ENCODE measurements at regions of chr9 and their contacts with region 1.

Region 1: GRCh38 chr9:97921959-97922724 is at the start of gene TRMO:
- DNase-seq: peak; percentile 93
- ATAC-seq: peak; percentile 82
- H3K4me3 ChIP-seq: peak within 1 kb of the TSS; percentile 76
- H3K27ac ChIP-seq: peak within 1 kb of the TSS; percentile 89
- H3K4me1 ChIP-seq: peaks cover 10% of the 10 kb centered on the region
- H3K27me3 ChIP-seq: peaks cover 14% of the 10 kb centered on the region; the same call in 1 of the 2 replicates
- CTCF ChIP-seq: peak; percentile 73
- total RNA-seq, gene TRMO: 7.5 and 14.3 TPM in 2 replicates

Region 2: GRCh38 chr9:97632985-97633858 is 288.9 kb before region 1 on chr9 and contains the starts of genes NCBP1 and TSTD2:
- CTCF ChIA-PET with region 1: no interaction called
- POLR2A ChIA-PET with region 1: interaction called, 7 read pairs
- intact Hi-C with region 1: loop called (anchors 1 kb)
- DNase-seq: peak; percentile 94
- ATAC-seq: peak; percentile 91
- H3K4me3 ChIP-seq: peak within 1 kb of the TSS; percentile 96
- H3K27ac ChIP-seq: peak within 1 kb of the TSS; percentile 89
- H3K4me1 ChIP-seq: peaks cover 16% of the 10 kb centered on the region
- H3K27me3 ChIP-seq: no peaks in the 10 kb centered on the region
- CTCF ChIP-seq: no peak
- total RNA-seq, gene NCBP1: 22.6 and 23.0 TPM in 2 replicates
- total RNA-seq, gene TSTD2: 7.4 and 11.2 TPM in 2 replicates

Region 3: DNA sequence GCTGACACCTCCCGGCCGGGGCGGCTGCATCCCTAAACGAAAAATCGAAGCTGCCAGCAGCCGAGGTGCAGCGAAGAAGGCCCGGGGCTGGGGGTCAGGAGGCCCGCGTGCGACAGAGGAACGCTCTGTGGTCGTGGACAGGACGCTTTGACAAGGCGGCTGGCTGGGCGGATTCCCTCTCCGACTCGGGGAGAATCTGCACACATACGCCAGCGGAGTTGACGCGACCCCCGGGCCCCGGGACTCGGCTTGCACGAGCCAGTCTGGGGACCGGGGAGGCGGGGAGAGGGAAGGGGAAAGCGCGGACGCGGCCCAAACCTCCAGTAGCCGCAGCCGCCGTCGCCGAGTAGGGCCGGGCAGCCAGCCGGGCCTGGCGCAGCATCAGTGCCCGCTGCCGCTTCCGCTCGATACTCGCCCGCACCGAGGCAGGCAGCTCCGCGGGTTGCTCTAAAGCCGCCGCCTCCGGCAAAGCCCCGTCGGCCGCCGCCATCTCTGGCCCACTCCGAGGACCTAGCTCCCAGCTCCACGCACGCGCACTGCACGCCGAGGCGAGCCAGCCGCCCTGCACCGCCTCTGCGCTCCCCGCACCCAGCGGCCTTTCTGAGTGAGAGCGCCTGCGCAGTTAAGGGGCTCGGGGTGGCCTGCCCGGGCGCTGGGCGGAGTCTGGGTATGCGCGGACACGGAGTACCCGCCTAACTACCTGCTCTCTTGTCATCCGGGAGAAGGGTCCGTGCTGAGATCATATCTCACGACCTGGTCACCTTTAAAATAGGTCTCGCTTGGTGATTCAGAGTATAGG is 225.1 kb before region 1 on chr9 and contains the start of gene XPA:
- CTCF ChIA-PET with region 1: no interaction called
- POLR2A ChIA-PET with region 1: interaction called, 13 read pairs
- intact Hi-C with region 1: no loop called
- DNase-seq: peak; percentile 92
- ATAC-seq: peak; percentile 91
- H3K4me3 ChIP-seq: peak within 1 kb of the TSS; percentile 83
- H3K27ac ChIP-seq: peak within 1 kb of the TSS; percentile 39
- H3K4me1 ChIP-seq: peaks cover 34% of the 10 kb centered on the region
- H3K27me3 ChIP-seq: no peaks in the 10 kb centered on the region
- CTCF ChIP-seq: no peak
- total RNA-seq, gene XPA: 7.4 and 9.4 TPM in 2 replicates

Region 4: DNA sequence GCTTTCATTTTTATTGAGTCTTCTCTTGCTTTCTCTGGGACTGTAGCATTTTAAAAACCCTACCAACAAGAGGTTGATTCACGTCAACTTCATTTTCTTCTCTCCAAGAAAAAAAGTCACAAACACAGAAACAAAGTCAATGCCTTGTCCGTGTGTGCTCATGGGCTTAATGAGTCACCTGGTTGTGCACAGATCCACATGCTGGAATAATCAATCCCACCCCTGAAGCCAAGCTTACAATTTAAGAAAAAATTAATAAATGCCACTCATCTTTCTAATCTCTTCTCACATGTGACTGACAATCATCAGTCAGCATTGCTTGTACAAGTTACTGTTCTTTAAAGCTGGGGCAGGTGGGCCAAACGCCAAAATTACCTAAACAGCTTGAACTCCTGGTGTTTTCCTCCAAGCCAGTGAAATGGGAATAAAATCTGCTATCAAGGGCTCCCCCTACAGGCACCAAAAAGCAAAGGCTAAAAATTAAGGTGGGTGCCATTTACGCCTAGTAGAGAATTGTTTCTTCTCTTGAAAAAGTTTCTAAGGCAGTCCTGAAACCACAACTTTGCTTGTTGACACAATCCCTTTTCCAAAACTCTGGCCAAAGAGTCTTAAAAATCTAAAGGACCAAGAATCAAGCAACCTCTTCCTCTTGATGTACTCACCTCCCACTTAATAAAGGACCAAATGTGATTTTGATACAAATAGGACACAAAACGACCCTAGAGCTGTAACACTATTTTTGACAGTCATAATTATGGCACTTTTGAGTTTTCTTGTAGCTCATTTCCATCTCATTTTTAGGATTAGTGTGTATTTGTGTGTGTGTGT is 21.2 kb before region 1 on chr9:
- CTCF ChIA-PET with region 1: no interaction called
- POLR2A ChIA-PET with region 1: no interaction called
- intact Hi-C with region 1: no loop called
- DNase-seq: peak; percentile 59
- ATAC-seq: peak; percentile 37
- H3K4me3 ChIP-seq: no peak overlapping the region
- H3K27ac ChIP-seq: no peak overlapping the region
- H3K4me1 ChIP-seq: peaks cover 7% of the 10 kb centered on the region
- H3K27me3 ChIP-seq: no peaks in the 10 kb centered on the region
- CTCF ChIP-seq: peak; percentile 81

Region 5: DNA sequence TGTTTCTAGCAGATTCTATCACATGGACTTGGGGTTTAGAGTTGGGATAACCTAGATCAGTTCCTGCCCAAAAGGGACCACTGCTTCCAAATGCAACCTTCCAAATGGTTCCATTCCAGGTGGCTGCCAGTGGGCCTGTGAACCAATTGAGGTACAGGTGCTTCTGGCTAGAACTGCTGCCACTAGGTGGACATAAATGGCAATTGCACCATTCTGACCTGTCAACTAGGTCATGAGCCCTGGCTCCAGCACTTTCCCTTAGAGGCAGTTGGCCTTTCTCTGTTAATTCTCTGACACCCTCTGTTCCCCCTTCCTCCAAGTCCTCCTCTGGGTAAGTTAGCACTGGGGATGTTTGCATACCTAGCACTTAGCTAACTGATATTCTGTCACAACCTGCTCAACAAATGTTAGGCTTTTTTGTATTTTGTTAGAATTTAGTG is 32.4 kb after region 1 on chr9:
- CTCF ChIA-PET with region 1: no interaction called
- POLR2A ChIA-PET with region 1: no interaction called
- intact Hi-C with region 1: loop called (anchors 1 kb)
- DNase-seq: peak; percentile 57
- ATAC-seq: peak; percentile 71
- H3K4me3 ChIP-seq: no peak overlapping the region
- H3K27ac ChIP-seq: no peak overlapping the region
- H3K4me1 ChIP-seq: no peaks in the 10 kb centered on the region
- H3K27me3 ChIP-seq: no peaks in the 10 kb centered on the region
- CTCF ChIP-seq: peak; percentile 70

Region 6: GRCh38 chr9:97982683-97983588 is 60.8 kb after region 1 on chr9 and contains the start of gene ANP32B:
- CTCF ChIA-PET with region 1: no interaction called
- POLR2A ChIA-PET with region 1: no interaction called
- intact Hi-C with region 1: loop called (anchors 2 kb)
- DNase-seq: peak; percentile 85
- ATAC-seq: peak; percentile 82
- H3K4me3 ChIP-seq: peak within 1 kb of the TSS; percentile 92
- H3K27ac ChIP-seq: peak within 1 kb of the TSS; percentile 81
- H3K4me1 ChIP-seq: peaks cover 21% of the 10 kb centered on the region
- H3K27me3 ChIP-seq: no peaks in the 10 kb centered on the region
- CTCF ChIP-seq: peak; percentile 47; the same call in 1 of the 2 replicates
- total RNA-seq, gene ANP32B: 14.8 and 32.6 TPM in 2 replicates

Region 7: GRCh38 chr9:98056269-98057137 is 134.4 kb after region 1 on chr9 and contains the start of gene NANS:
- CTCF ChIA-PET with region 1: interaction called, 3 read pairs
- POLR2A ChIA-PET with region 1: no interaction called
- intact Hi-C with region 1: loop called (anchors 2 kb)
- DNase-seq: peak; percentile 89
- ATAC-seq: peak; percentile 94
- H3K4me3 ChIP-seq: peak within 1 kb of the TSS; percentile 97
- H3K27ac ChIP-seq: peak within 1 kb of the TSS; percentile 77
- H3K4me1 ChIP-seq: peaks cover 12% of the 10 kb centered on the region
- H3K27me3 ChIP-seq: no peaks in the 10 kb centered on the region
- CTCF ChIP-seq: no peak
- total RNA-seq, gene NANS: 93.0 and 94.8 TPM in 2 replicates

Region 8: GRCh38 chr9:98263482-98264357 is 341.6 kb after region 1 on chr9:
- CTCF ChIA-PET with region 1: no interaction called
- POLR2A ChIA-PET with region 1: no interaction called
- intact Hi-C with region 1: loop called (anchors 1 kb)
- DNase-seq: peak; percentile 79
- ATAC-seq: peak; percentile 98
- H3K4me3 ChIP-seq: no peak overlapping the region
- H3K27ac ChIP-seq: no peak overlapping the region
- H3K4me1 ChIP-seq: no peaks in the 10 kb centered on the region
- H3K27me3 ChIP-seq: no peaks in the 10 kb centered on the region
- CTCF ChIP-seq: peak; percentile 88

Measured in PC-3 (cell line).